IMR-90 (cell line): ENCODE measurements at regions of chr10 and their contacts with region 1.

Region 1: GRCh38 chr10:114550756-114551635 is 107.1 kb downstream of the ABLIM1 start:
- DNase-seq: peak; percentile 47
- ATAC-seq: peak; percentile 48
- H3K4me3 ChIP-seq: peak overlapping the region; percentile 16; the same call in 1 of the 2 replicates
- H3K27ac ChIP-seq: no peak overlapping the region
- H3K4me1 ChIP-seq: no peaks in the 10 kb centered on the region
- H3K27me3 ChIP-seq: peaks cover 8% of the 10 kb centered on the region
- CTCF ChIP-seq: peak; percentile 55
- POLR2A ChIP-seq: no peak
- RAD21 ChIP-seq: peak; percentile 51

Region 2: GRCh38 chr10:114470956-114471905 is 79.8 kb before region 1 on chr10:
- CTCF ChIA-PET with region 1: interaction called, 5 read pairs
- POLR2A ChIA-PET with region 1: no interaction called
- dilution Hi-C with region 1: no loop called
- in situ Hi-C with region 1: loop called (anchors 5 kb)
- intact Hi-C with region 1: loop called (anchors 1 kb)
- DNase-seq: peak; percentile 77
- ATAC-seq: peak; percentile 98
- H3K4me3 ChIP-seq: no peak overlapping the region
- H3K27ac ChIP-seq: no peak overlapping the region
- H3K4me1 ChIP-seq: no peaks in the 10 kb centered on the region
- H3K27me3 ChIP-seq: peaks cover 2% of the 10 kb centered on the region; the same call in 1 of the 2 replicates
- CTCF ChIP-seq: peak; percentile 86
- POLR2A ChIP-seq: no peak
- RAD21 ChIP-seq: peak; percentile 83

Region 3: DNA sequence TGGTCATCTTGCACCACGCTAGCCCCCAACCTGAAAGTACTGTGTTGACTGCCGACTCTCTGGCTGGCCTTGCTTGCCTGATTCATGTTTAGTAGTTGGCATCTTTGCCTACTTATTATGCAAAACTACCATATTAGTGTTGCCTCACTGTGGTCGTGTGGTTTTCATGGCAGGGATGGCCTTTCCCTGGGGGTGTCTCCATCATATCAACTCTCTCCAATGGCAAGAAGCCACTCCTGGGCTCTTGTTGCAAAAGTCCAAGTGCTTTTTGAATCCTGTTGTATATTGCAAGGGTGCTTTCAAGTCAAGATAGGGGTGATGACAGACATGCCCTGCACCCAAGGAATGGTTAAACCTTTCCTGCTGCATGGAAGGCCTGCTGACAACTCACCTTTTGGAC is 67.7 kb after region 1 on chr10:
- CTCF ChIA-PET with region 1: no interaction called
- POLR2A ChIA-PET with region 1: no interaction called
- dilution Hi-C with region 1: no loop called
- in situ Hi-C with region 1: no loop called
- intact Hi-C with region 1: no loop called
- DNase-seq: no peak
- ATAC-seq: no peak
- H3K4me3 ChIP-seq: no peak overlapping the region
- H3K27ac ChIP-seq: no peak overlapping the region
- H3K4me1 ChIP-seq: peaks cover 11% of the 10 kb centered on the region
- H3K27me3 ChIP-seq: peaks cover 5% of the 10 kb centered on the region; the same call in 1 of the 2 replicates
- CTCF ChIP-seq: no peak
- POLR2A ChIP-seq: no peak
- RAD21 ChIP-seq: no peak

Region 4: GRCh38 chr10:114694752-114695151 is 143.8 kb after region 1 on chr10:
- CTCF ChIA-PET with region 1: interaction called, 7 read pairs
- POLR2A ChIA-PET with region 1: no interaction called
- dilution Hi-C with region 1: no loop called
- in situ Hi-C with region 1: loop called (anchors 5 kb)
- intact Hi-C with region 1: loop called (anchors 2 kb)
- DNase-seq: no peak
- ATAC-seq: no peak
- H3K4me3 ChIP-seq: no peak overlapping the region
- H3K27ac ChIP-seq: no peak overlapping the region
- H3K4me1 ChIP-seq: peaks cover 9% of the 10 kb centered on the region
- H3K27me3 ChIP-seq: no peaks in the 10 kb centered on the region
- CTCF ChIP-seq: peak; percentile 51
- POLR2A ChIP-seq: no peak
- RAD21 ChIP-seq: peak; percentile 59

Region 5: GRCh38 chr10:114779803-114780609 is 229.0 kb after region 1 on chr10:
- CTCF ChIA-PET with region 1: interaction called, 3 read pairs
- POLR2A ChIA-PET with region 1: no interaction called
- dilution Hi-C with region 1: no loop called
- in situ Hi-C with region 1: loop called (anchors 5 kb)
- intact Hi-C with region 1: no loop called
- DNase-seq: peak; percentile 92
- ATAC-seq: peak; percentile 83
- H3K4me3 ChIP-seq: no peak overlapping the region
- H3K27ac ChIP-seq: no peak overlapping the region
- H3K4me1 ChIP-seq: peaks cover 13% of the 10 kb centered on the region
- H3K27me3 ChIP-seq: no peaks in the 10 kb centered on the region
- CTCF ChIP-seq: no peak
- POLR2A ChIP-seq: no peak
- RAD21 ChIP-seq: no peak

Region 6: GRCh38 chr10:115129752-115130151 is 578.8 kb after region 1 on chr10:
- CTCF ChIA-PET with region 1: no interaction called
- POLR2A ChIA-PET with region 1: no interaction called
- dilution Hi-C with region 1: no loop called
- in situ Hi-C with region 1: no loop called
- intact Hi-C with region 1: loop called (anchors 2 kb)
- DNase-seq: peak; percentile 37
- ATAC-seq: peak; percentile 46
- H3K4me3 ChIP-seq: no peak overlapping the region
- H3K27ac ChIP-seq: no peak overlapping the region
- H3K4me1 ChIP-seq: no peaks in the 10 kb centered on the region
- H3K27me3 ChIP-seq: no peaks in the 10 kb centered on the region
- CTCF ChIP-seq: peak; percentile 56
- POLR2A ChIP-seq: no peak
- RAD21 ChIP-seq: peak; percentile 67